ENCODE measurements at regions of chr9 and their contacts with region 1.

Region 1: GRCh38 chr9:99919930-99920329 is 13.5 kb downstream of the STX17 start:
- DNase-seq: no peak
- H3K4me3 Mint-ChIP-seq: no peak overlapping the region
- H3K27ac Mint-ChIP-seq: no peak overlapping the region
- H3K4me1 Mint-ChIP-seq: peaks cover 30% of the 10 kb centered on the region
- H3K27me3 Mint-ChIP-seq: no peaks in the 10 kb centered on the region

Region 2: GRCh38 chr9:99906403-99907207 is 13.3 kb before region 1 on chr9 and contains the start of gene STX17:
- CTCF ChIA-PET with region 1: interaction called, 11 read pairs
- POLR2A ChIA-PET with region 1: interaction called, 3 read pairs
- DNase-seq: peak; percentile 78
- H3K4me3 Mint-ChIP-seq: peak within 1 kb of the TSS; percentile 94
- H3K27ac Mint-ChIP-seq: peak within 1 kb of the TSS; percentile 98
- H3K4me1 Mint-ChIP-seq: peaks cover 26% of the 10 kb centered on the region
- H3K27me3 Mint-ChIP-seq: peaks cover 13% of the 10 kb centered on the region
- total RNA-seq, gene STX17: 36.0 to 36.2 TPM

Region 3: GRCh38 chr9:99936947-99937587 is 17.1 kb after region 1 on chr9:
- CTCF ChIA-PET with region 1: no interaction called
- POLR2A ChIA-PET with region 1: no interaction called
- DNase-seq: no peak
- H3K4me3 Mint-ChIP-seq: no peak overlapping the region
- H3K27ac Mint-ChIP-seq: no peak overlapping the region
- H3K4me1 Mint-ChIP-seq: no peaks in the 10 kb centered on the region
- H3K27me3 Mint-ChIP-seq: no peaks in the 10 kb centered on the region

Region 4: DNA sequence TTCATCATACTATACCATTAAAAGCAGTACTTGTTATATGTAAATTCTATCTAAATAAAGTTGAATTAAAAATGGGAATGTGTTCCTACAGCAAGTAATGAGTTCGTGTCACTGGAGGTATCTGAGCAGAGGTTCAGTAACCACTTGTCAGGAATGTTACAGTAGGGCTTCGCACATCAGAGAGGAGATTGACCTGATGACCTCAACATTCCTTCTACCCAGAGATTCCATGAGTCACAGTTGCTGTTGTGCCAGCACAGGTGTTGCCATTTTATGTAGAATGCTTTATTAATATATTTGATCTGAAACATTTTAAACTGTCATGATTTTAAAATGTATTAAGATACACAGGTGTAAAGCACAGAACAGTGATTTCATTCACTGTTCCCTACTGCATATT is 46.8 kb after region 1 on chr9:
- CTCF ChIA-PET with region 1: no interaction called
- POLR2A ChIA-PET with region 1: no interaction called
- DNase-seq: no peak
- H3K4me3 Mint-ChIP-seq: no peak overlapping the region
- H3K27ac Mint-ChIP-seq: no peak overlapping the region
- H3K4me1 Mint-ChIP-seq: no peaks in the 10 kb centered on the region
- H3K27me3 Mint-ChIP-seq: no peaks in the 10 kb centered on the region

Measured in activated CD4-positive, alpha-beta T cell treated with anti-CD3 and anti-CD28 coated beads, Interleukin-2, amount 10 ng/mL, durations not matched to agents 7 days and 5 days (primary cell).